Head of caudate nucleus (tissue), 42 donors: ENCODE measurements at regions of chr17 and their contacts with region 1.

Region 1: GRCh38 chr17:9104370-9105041 is 83.2 kb downstream of the NTN1 start:
- DNase-seq: peak in 4 of 42 donors; percentile 13 to 44 (median 26)

Region 2: DNA sequence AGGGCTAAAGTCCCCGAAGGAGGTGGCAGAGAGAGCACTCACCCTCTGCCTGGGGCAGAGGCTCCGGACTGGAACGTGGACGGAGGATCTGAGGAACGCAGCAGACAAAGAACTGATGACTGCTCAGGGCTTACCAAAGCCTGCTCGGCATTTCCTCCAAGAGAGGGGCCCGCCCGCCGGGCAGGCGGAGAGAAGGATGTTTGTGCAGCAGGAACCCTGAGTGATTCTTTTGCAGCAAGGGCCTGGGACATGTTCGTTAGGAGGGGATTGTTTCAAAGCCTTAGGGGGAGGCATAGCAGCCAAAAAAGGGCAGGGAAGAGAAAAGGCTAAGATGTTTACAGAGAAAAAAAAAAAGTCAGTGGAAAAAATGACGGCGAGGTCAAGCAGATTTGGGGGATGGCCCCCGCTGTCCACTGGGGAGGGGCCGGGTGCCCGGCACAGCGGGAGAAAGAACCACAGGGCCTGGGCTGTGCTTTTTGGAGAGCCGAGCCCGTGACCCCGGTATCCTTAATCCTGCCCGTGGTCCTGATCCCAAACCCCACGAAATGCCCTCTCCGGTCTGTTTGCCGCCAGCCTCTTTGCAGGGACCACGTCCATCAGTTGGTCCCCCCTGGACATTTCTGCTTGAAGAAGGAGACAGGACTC is 46.1 kb after region 1 on chr17:
- intact Hi-C with region 1: loop called (anchors 5 kb)
- DNase-seq: no peak